Activated T-helper 1 cell treated with anti-CD3 and anti-CD28 coated beads, Interleukin-12 subunit alpha, Interleukin-12 subunit beta, Interleukin-2, Interleukin-4 antibody, amounts not matched to agents 30 ng/mL and 10 ng/mL and 1 ng/mL, durations not matched to agents 14 hours and 24 hours and 36 hours (primary cell): ENCODE measurements at regions of chr20 and their contacts with region 1.

Region 1: GRCh38 chr20:20237093-20237959 is 130.6 kb upstream of the INSM1 start:
- DNase-seq: no peak
- H3K4me3 Mint-ChIP-seq: no peak overlapping the region
- H3K27ac Mint-ChIP-seq: no peak overlapping the region
- H3K4me1 Mint-ChIP-seq: peaks cover 5% of the 10 kb centered on the region
- H3K27me3 Mint-ChIP-seq: peaks cover 13% of the 10 kb centered on the region

Region 2: DNA sequence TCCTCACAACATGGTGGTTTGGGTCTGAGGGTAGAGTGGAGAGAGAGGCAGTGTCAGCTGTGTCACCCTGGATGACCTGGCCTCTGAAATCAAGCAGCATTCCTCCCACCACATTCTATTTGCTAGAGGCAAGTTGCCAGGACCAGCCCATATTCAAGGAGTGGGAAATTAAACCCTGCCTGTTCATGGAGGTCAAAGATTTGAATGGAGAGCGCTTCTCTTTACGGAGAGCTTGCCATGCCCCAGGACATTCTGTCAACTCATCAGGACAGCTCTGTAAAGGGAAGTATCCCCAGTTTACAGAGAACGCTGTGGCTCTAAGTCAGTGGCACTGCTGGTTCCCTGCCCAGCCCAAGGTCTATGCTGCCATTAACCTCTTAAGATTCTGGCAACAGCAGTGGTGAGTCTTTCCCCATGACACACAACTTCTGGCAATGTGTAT is 40.6 kb after region 1 on chr20:
- intact Hi-C with region 1: loop called (anchors 2 kb)
- DNase-seq: no peak
- H3K4me3 Mint-ChIP-seq: no peak overlapping the region
- H3K27ac Mint-ChIP-seq: no peak overlapping the region
- H3K4me1 Mint-ChIP-seq: no peaks in the 10 kb centered on the region
- H3K27me3 Mint-ChIP-seq: peaks cover 17% of the 10 kb centered on the region

Region 3: DNA sequence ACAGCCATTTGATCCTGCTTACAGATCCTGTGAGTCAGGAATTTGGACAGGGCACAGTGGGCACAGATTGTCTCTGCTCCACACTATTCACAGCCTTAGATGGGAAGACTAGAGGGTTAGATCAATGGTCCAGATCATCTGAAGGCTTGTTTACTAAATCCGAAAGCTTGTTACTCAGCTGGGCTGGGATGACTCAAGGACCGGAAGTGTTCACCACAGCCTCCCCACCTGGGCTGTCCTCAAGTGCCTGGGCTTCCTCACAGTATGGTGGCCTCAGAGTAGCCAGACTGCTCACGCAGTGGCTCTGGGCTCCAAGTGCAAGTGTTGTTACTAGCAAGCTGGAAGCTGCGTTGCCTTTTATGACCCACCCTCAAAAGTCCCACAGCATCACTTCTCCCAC is 55.1 kb after region 1 on chr20:
- intact Hi-C with region 1: no loop called
- DNase-seq: no peak
- H3K4me3 Mint-ChIP-seq: no peak overlapping the region
- H3K27ac Mint-ChIP-seq: no peak overlapping the region
- H3K4me1 Mint-ChIP-seq: no peaks in the 10 kb centered on the region
- H3K27me3 Mint-ChIP-seq: no peaks in the 10 kb centered on the region